ENCODE measurements at regions of chrX and their contacts with region 1.

Region 1: GRCh38 chrX:136437774-136438173 is 50.0 kb upstream of the BRS3 start:
- DNase-seq: no peak
- ATAC-seq: no peak
- H3K4me3 ChIP-seq: no peak overlapping the region
- H3K4me3 Mint-ChIP-seq: no peak overlapping the region
- H3K27ac ChIP-seq: no peak overlapping the region
- H3K27ac Mint-ChIP-seq: no peak overlapping the region
- H3K4me1 ChIP-seq: no peaks in the 10 kb centered on the region
- H3K4me1 Mint-ChIP-seq: no peaks in the 10 kb centered on the region
- H3K27me3 ChIP-seq: no peaks in the 10 kb centered on the region
- H3K27me3 Mint-ChIP-seq: peaks cover 0 to 13% of the 10 kb centered on the region in 2 donors

Region 2: GRCh38 chrX:136450050-136450830 is 12.5 kb after region 1 on chrX:
- CTCF ChIA-PET with region 1: no interaction called
- POLR2A ChIA-PET with region 1: interaction called in 1 of 2 experiments, 12 read pairs
- DNase-seq: no peak
- ATAC-seq: no peak
- H3K4me3 ChIP-seq: no peak overlapping the region
- H3K4me3 Mint-ChIP-seq: no peak overlapping the region
- H3K27ac ChIP-seq: no peak overlapping the region
- H3K27ac Mint-ChIP-seq: no peak overlapping the region
- H3K4me1 ChIP-seq: no peaks in the 10 kb centered on the region
- H3K4me1 Mint-ChIP-seq: no peaks in the 10 kb centered on the region
- H3K27me3 ChIP-seq: no peaks in the 10 kb centered on the region
- H3K27me3 Mint-ChIP-seq: peaks cover 3 to 11% of the 10 kb centered on the region in 2 donors

Region 3: DNA sequence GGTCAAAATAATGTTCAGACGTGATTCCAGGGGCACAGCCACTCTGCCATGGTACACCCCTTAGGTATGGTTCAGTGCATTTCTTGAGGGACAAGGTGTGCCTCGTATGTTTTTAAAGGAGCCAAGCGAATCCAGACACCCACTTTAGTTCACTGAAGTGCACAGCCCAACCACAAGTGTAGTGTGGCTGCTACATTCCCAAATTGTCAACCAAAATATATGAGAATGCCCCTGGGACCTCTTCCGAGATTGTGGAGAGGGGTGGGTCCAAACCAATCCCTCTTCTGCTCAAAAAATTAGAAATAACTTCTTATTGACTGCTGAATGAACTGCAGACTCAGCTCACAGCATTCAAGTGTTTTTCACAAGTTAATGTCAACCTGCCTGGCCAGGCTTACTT is 42.6 kb after region 1 on chrX:
- CTCF ChIA-PET with region 1: no interaction called
- POLR2A ChIA-PET with region 1: no interaction called
- DNase-seq: no peak
- ATAC-seq: no peak
- H3K4me3 ChIP-seq: no peak overlapping the region
- H3K4me3 Mint-ChIP-seq: no peak overlapping the region
- H3K27ac ChIP-seq: no peak overlapping the region
- H3K27ac Mint-ChIP-seq: no peak overlapping the region
- H3K4me1 ChIP-seq: no peaks in the 10 kb centered on the region
- H3K4me1 Mint-ChIP-seq: no peaks in the 10 kb centered on the region
- H3K27me3 ChIP-seq: no peaks in the 10 kb centered on the region
- H3K27me3 Mint-ChIP-seq: peaks cover 0 to 26% of the 10 kb centered on the region in 2 donors

Region 4: DNA sequence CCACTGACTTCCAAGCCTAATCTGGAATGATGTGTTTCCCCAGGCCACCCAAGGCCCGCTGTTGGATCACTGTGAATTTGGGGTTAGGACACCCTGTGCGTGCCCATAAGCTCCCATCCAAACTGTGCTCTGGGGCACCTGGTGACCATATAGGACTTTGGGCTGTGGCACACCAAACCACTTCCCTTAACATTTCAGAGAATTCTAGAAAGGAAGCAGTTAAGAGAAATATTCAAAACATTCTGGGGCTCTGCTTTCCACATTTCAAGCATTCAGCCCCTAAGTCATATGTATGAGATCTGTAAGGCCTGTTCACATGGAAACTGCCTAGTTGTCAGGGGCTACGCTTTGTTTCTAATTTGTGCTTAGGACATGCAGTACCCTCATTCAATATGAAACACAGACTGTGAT is 108.6 kb after region 1 on chrX:
- CTCF ChIA-PET with region 1: no interaction called
- POLR2A ChIA-PET with region 1: no interaction called
- DNase-seq: peak in 3 of 35 experiments; percentile 0 to 12 (median 4)
- ATAC-seq: peak; percentile 37 to 79 (median 76)
- H3K4me3 ChIP-seq: no peak overlapping the region
- H3K4me3 Mint-ChIP-seq: peak overlapping the region in 1 of 3 donors; percentile 34
- H3K27ac ChIP-seq: peak overlapping the region; percentile 78
- H3K27ac Mint-ChIP-seq: peak overlapping the region; percentile 83 to 89
- H3K4me1 ChIP-seq: peaks cover 4 to 28% of the 10 kb centered on the region in 2 experiments
- H3K4me1 Mint-ChIP-seq: peaks cover 39 to 57% (median 55%) of the 10 kb centered on the region in 3 donors
- H3K27me3 ChIP-seq: no peaks in the 10 kb centered on the region
- H3K27me3 Mint-ChIP-seq: peaks cover 0 to 7% of the 10 kb centered on the region in 2 donors